Right ventricle myocardium inferior (tissue), 1 donor: ENCODE measurements at regions of chr7 and their contacts with region 1.

Region 1: DNA sequence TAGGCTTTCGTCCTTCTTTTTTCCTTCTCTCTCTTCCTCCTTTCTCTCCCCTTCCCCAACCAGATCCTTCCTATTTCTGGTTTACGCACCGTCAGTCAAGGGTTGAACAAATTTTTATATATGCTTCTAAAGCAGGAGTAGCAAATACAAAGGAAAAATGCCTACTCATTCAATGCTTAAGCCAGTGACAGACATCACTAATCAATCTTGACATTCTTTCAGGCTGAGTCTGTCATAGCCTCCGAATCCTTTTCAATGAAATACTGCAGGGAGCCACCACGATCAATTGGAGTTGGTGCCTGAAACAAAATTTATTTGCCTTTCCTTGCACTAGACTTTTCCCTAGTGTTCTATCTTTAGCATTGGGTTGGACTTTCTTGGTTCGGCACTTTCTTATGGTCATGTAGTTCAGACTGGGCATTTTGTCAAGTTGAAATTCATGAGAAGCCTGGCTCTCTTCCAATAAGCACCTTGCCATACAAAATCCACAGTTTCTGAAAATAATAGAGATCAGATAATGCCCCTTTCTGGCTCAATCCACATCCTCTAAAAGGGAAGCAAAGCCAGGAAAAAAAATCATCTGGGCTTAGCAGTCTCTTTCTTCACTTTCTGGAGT is 239.5 kb upstream of the PLXNA4 start:
- DNase-seq: no peak
- ATAC-seq: no peak

Region 2: GRCh38 chr7:132343199-132343598 is 472.6 kb before region 1 on chr7:
- intact Hi-C with region 1: no loop called
- DNase-seq: no peak
- ATAC-seq: peak; percentile 85

Region 3: DNA sequence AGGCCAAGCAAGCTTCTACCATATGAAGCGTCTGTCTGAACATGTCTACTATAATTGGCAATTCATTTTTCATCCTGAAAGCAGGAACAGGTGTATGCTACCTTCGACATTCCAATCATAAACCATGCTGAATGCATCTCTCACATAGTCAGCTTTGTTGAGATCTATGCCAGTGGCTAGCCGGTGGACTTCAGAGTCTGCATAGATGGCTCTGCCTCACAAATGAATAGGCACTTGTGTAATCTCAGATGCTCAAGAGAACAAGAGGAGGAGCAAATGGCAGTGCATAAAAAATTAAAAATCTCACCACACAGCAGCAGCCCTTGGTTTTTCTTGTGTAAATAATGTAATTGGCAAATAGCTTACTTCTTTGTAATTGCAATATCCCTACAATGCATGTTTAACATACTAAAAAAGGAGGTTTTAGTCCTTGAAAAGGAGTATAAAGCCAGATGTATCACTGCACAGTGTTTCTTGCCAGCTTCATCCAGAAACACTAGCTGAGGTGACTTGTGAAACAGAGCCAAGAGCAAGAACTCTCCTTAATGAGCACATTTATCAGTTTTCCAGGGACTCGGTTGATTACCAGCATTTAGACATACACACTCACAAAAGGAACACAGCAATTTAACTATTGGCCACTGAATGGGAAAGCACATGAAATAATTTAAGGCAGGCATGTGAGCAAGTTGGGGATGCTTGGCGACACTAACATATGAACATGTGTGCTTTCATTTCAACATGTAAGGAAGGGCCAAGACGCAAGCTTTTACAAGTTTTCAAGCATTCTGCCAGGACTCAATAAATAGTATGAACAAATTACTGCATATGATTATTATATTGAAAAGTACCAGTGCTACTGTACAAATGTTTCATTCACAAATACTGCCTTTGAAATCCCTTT is 10.4 kb after region 1 on chr7:
- intact Hi-C with region 1: loop called (anchors 1 kb)
- DNase-seq: no peak
- ATAC-seq: no peak